Motor neuron (in vitro differentiated cells): ENCODE measurements at regions of chr4 and their contacts with region 1.

Region 1: GRCh38 chr4:173025131-173025530 is 143.5 kb upstream of the GALNT7 start:
- ATAC-seq: peak; percentile 49 to 84 (median 68)
- H3K4me3 ChIP-seq: no peak overlapping the region
- H3K27ac ChIP-seq: no peak overlapping the region
- H3K4me1 ChIP-seq: peaks cover 3 to 10% of the 10 kb centered on the region in 2 donors

Region 2: GRCh38 chr4:173168396-173169177 is 143.5 kb after region 1 on chr4 and contains the start of gene GALNT7:
- in situ Hi-C with region 1: loop called in 1 of 9 experiments (anchors 25 kb)
- ATAC-seq: peak; percentile 42 to 83 (median 76)
- H3K4me3 ChIP-seq: peak within 1 kb of the TSS; percentile 78 to 99 (median 89)
- H3K27ac ChIP-seq: peak within 1 kb of the TSS; percentile 83 to 91
- H3K4me1 ChIP-seq: peaks cover 8 to 13% of the 10 kb centered on the region in 2 donors
- total RNA-seq, gene GALNT7: 10.4 to 39.5 (median 28.5) TPM

Region 3: DNA sequence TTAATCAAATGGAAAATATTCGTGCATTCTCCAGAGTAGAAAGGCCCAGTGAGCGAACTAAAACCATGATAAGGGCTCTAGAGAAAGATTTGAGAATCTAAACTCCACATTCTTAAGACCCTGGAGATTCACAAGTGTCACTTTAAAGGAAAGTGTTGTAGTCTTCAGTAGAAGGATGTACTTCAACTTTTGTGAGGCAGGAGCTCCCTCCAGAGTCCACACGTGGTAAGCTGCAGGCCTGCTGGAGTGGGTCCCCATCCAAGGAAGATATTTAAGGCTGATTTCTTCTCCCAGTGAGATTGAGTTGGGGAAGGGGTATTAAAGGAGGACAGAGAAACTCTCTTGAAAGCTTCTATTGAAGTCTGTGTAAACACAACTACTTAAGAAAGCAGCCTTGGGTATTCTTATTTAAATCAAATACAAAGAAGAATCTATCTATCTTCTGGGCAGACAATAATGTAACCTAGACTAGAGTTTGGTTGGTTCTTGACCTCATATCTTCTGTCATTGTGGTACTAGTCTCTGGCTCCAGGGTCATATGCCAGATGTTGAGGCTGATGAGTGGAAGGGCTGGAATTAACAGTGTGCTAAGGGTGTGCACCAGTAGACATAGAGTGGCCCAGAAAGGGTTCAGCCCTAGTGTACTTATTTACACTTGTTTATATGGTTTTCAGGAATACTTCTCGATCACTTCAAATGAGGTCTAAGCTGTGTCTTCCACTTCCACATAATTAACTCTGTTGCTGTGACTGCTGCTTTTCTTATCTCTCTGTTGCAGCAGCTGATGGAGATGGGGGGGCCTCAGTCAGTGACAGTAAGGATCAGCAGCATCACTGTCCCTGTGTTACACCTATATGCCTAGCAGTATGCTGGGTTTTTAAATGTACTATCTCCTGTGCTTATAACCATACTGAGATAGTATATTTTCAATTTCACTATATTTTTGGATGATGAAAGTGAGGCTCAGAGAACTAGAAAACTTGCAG is 232.9 kb after region 1 on chr4:
- in situ Hi-C with region 1: loop called in 5 of 9 experiments (anchors 10 to 25 kb)
- ATAC-seq: peak; percentile 71 to 100 (median 94)
- H3K4me3 ChIP-seq: no peak overlapping the region
- H3K27ac ChIP-seq: no peak overlapping the region
- H3K4me1 ChIP-seq: peaks cover 4 to 6% of the 10 kb centered on the region in 2 donors